Activated CD4-positive, alpha-beta T cell treated with anti-CD3 and anti-CD28 coated beads, Interleukin-2, amount 10 ng/mL, durations not matched to agents 24 days and 14 days (primary cell): ENCODE measurements at regions of chr12 and their contacts with region 1.

Region 1: GRCh38 chr12:42023733-42024494 is 120.8 kb downstream of the GXYLT1 start:
- DNase-seq: peak; percentile 91
- H3K4me3 Mint-ChIP-seq: peak overlapping the region; percentile 59
- H3K27ac Mint-ChIP-seq: no peak overlapping the region
- H3K4me1 Mint-ChIP-seq: peaks cover 3% of the 10 kb centered on the region
- H3K27me3 Mint-ChIP-seq: no peaks in the 10 kb centered on the region

Region 2: DNA sequence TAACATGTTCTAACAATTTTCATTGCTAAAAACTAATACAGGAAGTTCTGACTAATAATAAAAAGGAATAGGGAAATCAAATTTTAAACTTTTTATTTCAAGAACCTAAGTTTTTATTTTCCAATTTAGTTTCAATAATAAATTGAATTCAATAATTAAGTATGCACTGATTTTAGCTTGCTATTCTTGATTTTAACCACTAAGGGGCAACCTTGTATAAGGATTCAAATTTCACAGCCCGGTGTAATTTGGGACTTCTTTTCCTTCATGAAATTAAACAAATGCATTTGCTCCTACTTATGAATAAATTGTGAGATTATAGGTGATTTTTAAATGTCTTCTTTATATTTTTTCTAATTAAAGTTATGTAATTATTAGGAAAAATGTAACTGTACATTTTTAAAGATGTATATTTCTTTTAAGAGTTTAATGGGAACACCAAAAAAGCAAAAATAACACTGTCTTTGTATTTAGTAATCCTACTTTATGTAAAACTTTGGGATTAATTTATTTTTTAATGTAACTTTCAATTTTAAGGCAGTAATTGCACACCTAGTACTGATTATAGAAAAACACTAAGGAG is 1077.2 kb before region 1 on chr12:
- intact Hi-C with region 1: loop called (anchors 5 kb)
- DNase-seq: no peak
- H3K4me3 Mint-ChIP-seq: no peak overlapping the region
- H3K27ac Mint-ChIP-seq: no peak overlapping the region
- H3K4me1 Mint-ChIP-seq: no peaks in the 10 kb centered on the region
- H3K27me3 Mint-ChIP-seq: no peaks in the 10 kb centered on the region

Region 3: DNA sequence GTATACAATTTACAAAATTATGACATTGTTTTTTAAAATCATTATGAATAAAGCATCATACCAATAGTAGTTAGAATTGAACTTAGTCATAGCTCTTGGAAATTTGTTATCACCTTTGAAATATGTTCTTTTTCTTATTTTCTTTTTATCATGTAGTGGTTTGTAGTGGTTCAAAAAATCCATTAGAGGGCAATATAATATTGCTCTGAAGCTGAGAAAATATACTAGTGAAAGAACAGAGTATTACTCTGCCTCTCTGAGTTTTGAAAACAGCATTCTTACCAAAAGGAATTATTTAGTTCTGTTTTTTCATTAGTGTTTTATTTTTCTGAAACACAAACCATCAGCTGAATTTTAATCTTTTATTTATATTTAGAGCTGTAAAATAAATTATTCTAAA is 759.6 kb before region 1 on chr12:
- intact Hi-C with region 1: loop called (anchors 5 kb)
- DNase-seq: no peak
- H3K4me3 Mint-ChIP-seq: no peak overlapping the region
- H3K27ac Mint-ChIP-seq: no peak overlapping the region
- H3K4me1 Mint-ChIP-seq: no peaks in the 10 kb centered on the region
- H3K27me3 Mint-ChIP-seq: no peaks in the 10 kb centered on the region

Region 4: GRCh38 chr12:42213023-42213422 is 189.1 kb after region 1 on chr12:
- intact Hi-C with region 1: no loop called
- DNase-seq: no peak
- H3K4me3 Mint-ChIP-seq: no peak overlapping the region
- H3K27ac Mint-ChIP-seq: no peak overlapping the region
- H3K4me1 Mint-ChIP-seq: peaks cover 7% of the 10 kb centered on the region
- H3K27me3 Mint-ChIP-seq: no peaks in the 10 kb centered on the region